ENCODE measurements at regions of chr1 and their contacts with region 1.

Region 1: GRCh38 chr1:36369061-36369861 is 16.5 kb downstream of the STK40 start:
- DNase-seq: peak; percentile 76 to 80 (median 79)
- H3K4me3 ChIP-seq: no peak overlapping the region
- H3K4me3 Mint-ChIP-seq: peak overlapping the region in 6 of 8 donors; percentile 11 to 72 (median 28)
- H3K27ac ChIP-seq: peak overlapping the region; percentile 24
- H3K27ac Mint-ChIP-seq: peak overlapping the region; percentile 57 to 89 (median 82)
- H3K4me1 ChIP-seq: peaks cover 72% of the 10 kb centered on the region
- H3K4me1 Mint-ChIP-seq: peaks cover 46 to 75% (median 64%) of the 10 kb centered on the region in 4 donors
- H3K27me3 ChIP-seq: no peaks in the 10 kb centered on the region
- H3K27me3 Mint-ChIP-seq: no peaks in the 10 kb centered on the region

Region 2: DNA sequence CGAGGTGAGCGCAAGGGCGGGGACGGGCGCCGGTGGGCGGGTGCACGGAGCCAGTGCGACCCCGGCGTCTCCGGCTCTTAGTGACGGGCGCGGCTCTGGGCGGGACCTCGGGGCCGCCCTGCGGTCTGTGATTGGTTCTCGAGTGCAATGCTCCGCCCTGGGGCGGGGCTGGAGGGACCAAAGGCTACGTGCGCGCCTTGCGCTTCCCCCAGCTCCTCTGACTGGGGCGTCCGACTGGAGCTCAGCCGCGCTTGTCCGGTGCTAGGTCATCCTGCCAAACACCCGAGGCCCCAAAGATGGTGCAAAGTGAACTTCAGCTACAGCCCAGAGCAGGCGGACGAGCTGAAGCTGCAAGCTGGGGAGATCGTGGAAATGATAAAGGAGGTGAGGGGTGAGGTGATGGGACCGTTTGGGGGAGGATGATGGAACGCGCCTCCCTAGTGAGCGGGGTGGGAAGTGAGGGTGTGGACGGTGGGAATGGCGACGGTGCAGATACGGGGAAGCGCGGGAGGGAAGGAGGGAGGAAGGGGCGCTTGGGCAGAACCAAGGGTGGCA is 62.3 kb before region 1 on chr1:
- CTCF ChIA-PET with region 1: interaction called, 12 read pairs
- POLR2A ChIA-PET with region 1: interaction called, 11 read pairs
- intact Hi-C with region 1: loop called (anchors 1 kb)
- DNase-seq: peak; percentile 90 to 94 (median 92)
- H3K4me3 ChIP-seq: peak overlapping the region; percentile 77 to 81
- H3K4me3 Mint-ChIP-seq: peak overlapping the region; percentile 91 to 99 (median 94)
- H3K27ac ChIP-seq: peak overlapping the region; percentile 73
- H3K27ac Mint-ChIP-seq: peak overlapping the region; percentile 74 to 96 (median 92)
- H3K4me1 ChIP-seq: peaks cover 23% of the 10 kb centered on the region
- H3K4me1 Mint-ChIP-seq: peaks cover 5 to 21% (median 11%) of the 10 kb centered on the region in 4 donors
- H3K27me3 ChIP-seq: no peaks in the 10 kb centered on the region
- H3K27me3 Mint-ChIP-seq: no peaks in the 10 kb centered on the region

Region 3: DNA sequence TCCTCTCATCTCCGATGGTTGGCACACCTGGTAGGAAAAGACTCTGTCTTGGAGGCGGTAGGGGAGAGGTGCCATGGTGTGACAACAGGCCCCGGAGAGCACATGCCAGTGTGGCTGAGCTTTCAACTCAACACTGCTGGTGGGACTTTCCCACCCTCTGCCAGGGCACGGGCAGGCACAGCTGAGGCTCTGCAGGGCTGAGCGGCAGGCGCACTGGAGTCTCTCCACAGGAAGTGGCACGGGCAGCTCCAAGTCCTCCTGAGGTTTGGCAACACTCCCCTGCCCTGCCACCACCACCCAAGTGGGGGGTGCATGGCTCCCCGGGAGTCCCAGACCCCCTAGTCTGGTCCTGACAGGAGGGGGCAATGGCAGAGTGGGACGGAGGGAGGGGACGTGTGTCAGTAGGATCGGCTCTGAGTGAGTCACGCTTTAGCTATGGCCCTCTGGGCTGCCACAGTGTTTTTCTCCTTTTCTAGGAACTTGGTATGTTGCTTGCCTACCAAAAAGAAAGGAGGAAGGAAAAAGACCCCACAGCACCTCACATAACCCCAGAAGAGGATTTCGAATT is 18.5 kb before region 1 on chr1:
- CTCF ChIA-PET with region 1: interaction called, 122 read pairs
- POLR2A ChIA-PET with region 1: interaction called, 73 read pairs
- intact Hi-C with region 1: loop called (anchors 2 kb)
- DNase-seq: peak; percentile 42 to 82 (median 53)
- H3K4me3 ChIP-seq: no peak overlapping the region
- H3K4me3 Mint-ChIP-seq: peak overlapping the region in 7 of 8 donors; percentile 10 to 66 (median 58)
- H3K27ac ChIP-seq: peak overlapping the region; percentile 19
- H3K27ac Mint-ChIP-seq: peak overlapping the region; percentile 66 to 91 (median 83)
- H3K4me1 ChIP-seq: peaks cover 24% of the 10 kb centered on the region
- H3K4me1 Mint-ChIP-seq: peaks cover 10 to 37% (median 22%) of the 10 kb centered on the region in 4 donors
- H3K27me3 ChIP-seq: no peaks in the 10 kb centered on the region
- H3K27me3 Mint-ChIP-seq: no peaks in the 10 kb centered on the region

Region 4: DNA sequence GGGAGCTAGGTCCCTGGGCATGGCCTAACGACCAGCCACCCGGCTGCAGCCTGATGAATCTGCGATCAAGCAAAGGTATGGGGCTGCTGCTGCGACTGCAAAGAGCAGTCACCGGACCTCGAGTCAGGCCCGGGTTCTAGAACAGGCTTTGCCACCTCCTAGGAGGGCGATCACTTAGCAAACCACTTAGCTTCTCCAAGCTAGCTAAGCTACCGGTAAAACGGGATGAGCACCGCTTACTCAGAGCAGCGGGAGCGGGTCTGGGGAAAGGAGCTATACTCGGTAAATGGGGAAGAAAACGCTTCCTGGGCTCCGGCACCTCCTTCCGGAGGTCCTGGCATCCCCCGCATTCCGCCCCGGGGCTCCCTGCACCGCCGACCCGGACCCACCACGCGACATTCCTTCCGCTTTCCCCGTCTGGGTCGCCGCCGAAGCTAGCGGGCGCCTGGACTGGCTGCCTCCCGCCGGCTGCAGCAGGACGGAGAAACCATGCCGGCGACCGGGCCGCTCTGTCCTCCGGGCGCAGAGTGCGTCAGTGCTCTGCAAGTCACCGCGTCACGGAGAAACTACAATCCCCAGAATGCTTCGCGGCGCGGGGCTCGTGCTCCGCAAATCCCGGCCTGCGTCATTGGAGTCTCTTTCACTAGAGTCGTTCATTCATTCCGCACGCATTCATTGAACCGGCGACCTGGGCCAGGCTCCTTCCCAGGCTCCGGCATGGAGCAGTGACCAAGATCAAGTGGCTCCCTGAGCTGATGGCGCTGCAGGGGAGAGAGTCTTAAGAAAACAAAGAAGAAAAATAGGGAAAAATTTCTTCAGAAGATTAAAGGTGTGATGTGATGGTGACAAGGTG is 28.3 kb after region 1 on chr1 and contains the start of gene LSM10:
- CTCF ChIA-PET with region 1: interaction called, 22 read pairs
- POLR2A ChIA-PET with region 1: interaction called, 13 read pairs
- intact Hi-C with region 1: loop called (anchors 1 kb)
- DNase-seq: peak; percentile 85 to 94 (median 86)
- H3K4me3 ChIP-seq: peak within 1 kb of the TSS; percentile 90 to 97
- H3K4me3 Mint-ChIP-seq: peak within 1 kb of the TSS; percentile 95 to 99 (median 98)
- H3K27ac ChIP-seq: peak within 1 kb of the TSS; percentile 90
- H3K27ac Mint-ChIP-seq: peak within 1 kb of the TSS; percentile 89 to 100 (median 98)
- H3K4me1 ChIP-seq: peaks cover 20% of the 10 kb centered on the region
- H3K4me1 Mint-ChIP-seq: peaks cover 13 to 41% (median 26%) of the 10 kb centered on the region in 4 donors
- H3K27me3 ChIP-seq: no peaks in the 10 kb centered on the region
- H3K27me3 Mint-ChIP-seq: no peaks in the 10 kb centered on the region
- total RNA-seq, gene LSM10: 51.0 to 53.0 TPM

Region 5: GRCh38 chr1:36420836-36421664 is 51.8 kb after region 1 on chr1:
- CTCF ChIA-PET with region 1: interaction called, 20 read pairs
- POLR2A ChIA-PET with region 1: interaction called, 5 read pairs
- intact Hi-C with region 1: loop called (anchors 1 kb)
- DNase-seq: peak; percentile 83 to 88 (median 86)
- H3K4me3 ChIP-seq: no peak overlapping the region
- H3K4me3 Mint-ChIP-seq: peak overlapping the region; percentile 49 to 84 (median 74)
- H3K27ac ChIP-seq: peak overlapping the region; percentile 30
- H3K27ac Mint-ChIP-seq: peak overlapping the region; percentile 82 to 97 (median 94)
- H3K4me1 ChIP-seq: peaks cover 21% of the 10 kb centered on the region
- H3K4me1 Mint-ChIP-seq: peaks cover 19 to 29% (median 22%) of the 10 kb centered on the region in 4 donors
- H3K27me3 ChIP-seq: no peaks in the 10 kb centered on the region
- H3K27me3 Mint-ChIP-seq: no peaks in the 10 kb centered on the region

Region 6: GRCh38 chr1:36471830-36472641 is 102.8 kb after region 1 on chr1:
- CTCF ChIA-PET with region 1: no interaction called
- POLR2A ChIA-PET with region 1: no interaction called
- intact Hi-C with region 1: no loop called
- DNase-seq: no peak
- H3K4me3 ChIP-seq: no peak overlapping the region
- H3K4me3 Mint-ChIP-seq: no peak overlapping the region
- H3K27ac ChIP-seq: no peak overlapping the region
- H3K27ac Mint-ChIP-seq: no peak overlapping the region
- H3K4me1 ChIP-seq: no peaks in the 10 kb centered on the region
- H3K4me1 Mint-ChIP-seq: no peaks in the 10 kb centered on the region
- H3K27me3 ChIP-seq: no peaks in the 10 kb centered on the region
- H3K27me3 Mint-ChIP-seq: no peaks in the 10 kb centered on the region